ENCODE measurements at regions of chr11 and their contacts with region 1.

Region 1: GRCh38 chr11:96342961-96343711 is at the start of gene MAML2:
- ATAC-seq: peak; percentile 91 to 99 (median 96)
- H3K4me3 ChIP-seq: peak within 1 kb of the TSS; percentile 47 to 99 (median 60)
- H3K27ac ChIP-seq: peak within 1 kb of the TSS in 1 of 2 donors; percentile 59
- H3K4me1 ChIP-seq: peaks cover 42% of the 10 kb centered on the region in 2 donors
- total RNA-seq, gene MAML2: 4.9 to 21.2 (median 6.4) TPM

Region 2: DNA sequence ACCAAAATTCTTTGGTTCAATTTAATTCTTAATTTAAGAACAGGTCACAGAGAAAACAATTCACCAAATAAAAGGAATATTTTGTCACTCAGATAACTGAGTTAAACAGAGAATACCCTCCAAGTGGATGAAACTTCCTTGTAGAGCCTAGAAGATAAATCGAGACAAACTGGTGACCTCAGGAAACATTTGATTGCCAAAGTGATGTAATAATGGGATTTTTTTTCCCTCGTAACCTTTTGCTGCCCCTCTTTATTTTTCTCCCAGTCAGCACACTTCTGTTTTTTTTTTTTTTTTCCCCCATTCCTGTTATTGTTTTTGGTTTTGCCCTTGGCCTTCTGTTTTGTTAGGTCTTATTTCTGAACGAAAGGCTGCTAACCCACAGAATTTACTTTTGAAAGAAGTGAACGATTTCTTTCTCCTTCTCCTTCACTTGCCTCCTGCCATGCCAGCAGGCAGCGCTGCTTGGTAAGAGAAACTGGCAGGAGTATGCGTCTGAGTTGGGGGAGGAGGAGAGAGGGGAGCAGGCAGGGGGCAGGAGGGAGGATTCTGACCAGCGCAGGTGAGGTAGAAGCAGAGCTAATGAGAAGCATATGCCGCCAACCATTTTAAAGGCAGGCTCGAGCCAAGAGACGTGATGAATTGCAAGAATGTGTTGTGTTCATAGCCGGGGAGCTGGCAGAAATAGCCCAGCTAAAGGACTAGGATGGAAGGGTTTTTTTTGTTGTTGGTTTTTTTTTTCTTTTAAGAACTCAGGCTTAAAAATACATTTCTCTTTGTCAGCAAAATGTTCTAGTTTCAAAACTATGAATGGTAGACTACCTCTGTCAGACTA is 297.3 kb before region 1 on chr11:
- in situ Hi-C with region 1: loop called in 6 of 9 experiments (anchors 25 kb)
- ATAC-seq: peak; percentile 22 to 89 (median 78)
- H3K4me3 ChIP-seq: no peak overlapping the region
- H3K27ac ChIP-seq: no peak overlapping the region
- H3K4me1 ChIP-seq: peaks cover 21 to 26% of the 10 kb centered on the region in 2 donors

Region 3: DNA sequence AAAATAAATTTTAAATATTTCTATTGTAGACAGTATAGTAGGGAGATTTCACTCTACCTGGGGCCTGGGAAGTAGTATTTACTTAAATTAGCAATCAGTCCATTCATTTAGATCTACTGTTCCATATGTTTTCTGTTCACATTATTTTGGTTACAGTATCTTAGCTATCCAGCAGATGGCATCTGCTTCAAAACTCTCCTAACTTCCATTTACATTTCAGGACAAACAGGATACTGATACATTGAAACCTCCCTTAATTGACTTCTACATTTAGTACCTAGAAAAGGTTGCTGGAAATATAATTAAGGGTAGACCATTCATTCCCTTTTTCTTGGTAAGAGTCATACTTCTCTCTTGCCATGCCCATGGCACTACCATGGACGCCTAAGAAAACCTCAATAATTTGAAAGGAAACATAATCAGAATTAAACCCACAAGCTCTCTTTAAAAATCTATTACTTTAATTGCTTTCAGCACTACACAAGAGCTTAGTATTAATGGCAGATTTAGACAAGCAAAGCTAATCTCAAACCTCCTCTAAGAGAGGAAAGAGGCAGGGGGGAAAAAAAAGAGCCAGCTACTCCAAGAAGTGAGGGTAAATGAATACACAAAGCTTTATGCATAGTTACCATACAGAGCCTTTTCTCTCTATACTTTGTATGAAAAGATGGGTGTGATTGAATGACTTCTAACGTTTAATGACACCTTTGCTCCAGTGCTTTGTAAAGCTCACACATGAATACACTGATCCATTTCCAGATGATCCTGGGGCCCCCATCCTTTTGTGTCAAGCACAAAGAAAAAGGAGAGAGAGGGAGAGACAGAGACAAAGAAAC is 288.0 kb before region 1 on chr11:
- in situ Hi-C with region 1: loop called in 4 of 9 experiments (anchors 25 kb)
- ATAC-seq: peak; percentile 38 to 90 (median 84)
- H3K4me3 ChIP-seq: no peak overlapping the region
- H3K27ac ChIP-seq: peak overlapping the region; percentile 38 to 71
- H3K4me1 ChIP-seq: peaks cover 28 to 34% of the 10 kb centered on the region in 2 donors

Region 4: DNA sequence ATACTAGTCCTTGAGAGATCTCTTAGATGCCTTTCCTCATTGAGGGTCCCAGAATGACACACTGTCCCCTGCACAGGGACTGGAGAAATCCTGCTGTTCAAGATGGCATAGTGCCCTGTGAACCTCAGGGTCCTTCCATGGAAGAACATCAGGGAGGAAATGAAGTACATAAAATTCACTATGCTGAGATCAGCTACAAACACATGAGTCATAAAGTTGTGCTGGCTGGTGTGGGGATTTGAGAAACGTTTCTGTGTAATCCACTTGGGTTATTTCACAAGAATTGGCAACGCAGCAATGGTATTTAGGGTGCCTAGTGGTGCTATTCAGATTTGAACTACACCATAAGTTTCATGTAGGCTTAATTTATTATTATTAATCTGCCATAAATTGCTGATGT is 174.5 kb before region 1 on chr11:
- in situ Hi-C with region 1: no loop called
- ATAC-seq: peak in 5 of 8 experiments; percentile 65 to 89 (median 79)
- H3K4me3 ChIP-seq: no peak overlapping the region
- H3K27ac ChIP-seq: no peak overlapping the region
- H3K4me1 ChIP-seq: peaks cover 25 to 44% of the 10 kb centered on the region in 2 donors